Activated naive CD4-positive, alpha-beta T cell treated with anti-CD3 and anti-CD28 coated beads for 36 hours (primary cell): ENCODE measurements at regions of chr1 and their contacts with region 1.

Region 1: DNA sequence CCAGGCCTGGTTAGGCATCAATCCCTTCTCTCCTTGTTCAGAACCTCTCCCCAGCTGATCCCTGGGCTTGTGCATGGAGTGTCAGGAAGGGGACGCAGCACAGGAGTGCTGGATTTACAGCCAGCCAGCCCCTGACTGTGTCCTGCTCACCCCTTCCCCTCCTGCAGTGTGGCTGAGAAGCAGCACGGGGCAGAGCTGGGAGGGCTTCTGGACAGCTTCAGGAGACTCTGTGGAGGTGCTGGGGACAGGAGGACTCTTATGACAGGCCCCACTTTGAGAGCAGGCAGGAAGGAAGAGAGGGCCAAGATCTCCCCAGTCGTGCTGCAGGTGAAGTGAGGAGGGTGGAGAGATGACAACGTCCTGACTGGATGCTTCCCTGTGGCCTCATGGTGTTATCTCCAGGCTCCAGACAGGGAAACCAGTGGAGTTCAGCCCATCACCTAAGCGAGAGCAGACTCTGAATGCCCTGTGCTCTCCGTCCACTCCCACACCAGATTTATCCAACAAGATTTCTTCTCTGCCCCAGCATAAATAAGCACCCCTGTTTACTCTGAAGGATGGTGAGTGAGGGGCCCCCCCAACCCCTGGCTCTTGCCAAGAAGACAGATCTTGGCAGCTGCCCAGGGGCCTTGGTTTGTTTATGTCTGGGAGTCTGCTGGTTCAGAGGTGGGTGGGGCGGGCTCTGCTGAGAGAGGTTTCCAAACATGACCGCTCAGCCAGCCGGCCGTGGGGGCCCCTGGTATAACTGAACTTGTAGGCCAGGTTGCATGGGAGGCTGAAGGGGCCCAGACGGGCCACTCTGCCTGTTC is 21.3 kb downstream of the TMCC2 start:
- DNase-seq: no peak
- H3K4me3 Mint-ChIP-seq: no peak overlapping the region
- H3K27ac Mint-ChIP-seq: no peak overlapping the region
- H3K4me1 Mint-ChIP-seq: peaks cover 3% of the 10 kb centered on the region
- H3K27me3 Mint-ChIP-seq: no peaks in the 10 kb centered on the region

Region 2: GRCh38 chr1:205237526-205238484 is 11.2 kb before region 1 on chr1:
- CTCF ChIA-PET with region 1: interaction called, 277 read pairs
- intact Hi-C with region 1: loop called (anchors 1 kb)
- DNase-seq: peak; percentile 92
- H3K4me3 Mint-ChIP-seq: peak overlapping the region; percentile 44
- H3K27ac Mint-ChIP-seq: peak overlapping the region; percentile 98
- H3K4me1 Mint-ChIP-seq: peaks cover 77% of the 10 kb centered on the region
- H3K27me3 Mint-ChIP-seq: no peaks in the 10 kb centered on the region

Region 3: GRCh38 chr1:205568469-205569361 is 319.7 kb after region 1 on chr1:
- CTCF ChIA-PET with region 1: no interaction called
- intact Hi-C with region 1: no loop called
- DNase-seq: no peak
- H3K4me3 Mint-ChIP-seq: peak overlapping the region; percentile 50
- H3K27ac Mint-ChIP-seq: no peak overlapping the region
- H3K4me1 Mint-ChIP-seq: peaks cover 1% of the 10 kb centered on the region
- H3K27me3 Mint-ChIP-seq: peaks cover 34% of the 10 kb centered on the region